Right ventricle myocardium inferior (tissue), 1 donor: ENCODE measurements at regions of chr5 and their contacts with region 1.

Region 1: GRCh38 chr5:114018186-114018585 is 343.7 kb upstream of the KCNN2 start:
- DNase-seq: no peak
- ATAC-seq: no peak

Region 2: GRCh38 chr5:113678924-113679575 is 339.1 kb before region 1 on chr5:
- intact Hi-C with region 1: loop called (anchors 10 kb)
- DNase-seq: no peak
- ATAC-seq: no peak